CD4-positive, alpha-beta memory T cell (primary cell): ENCODE measurements at regions of chr1 and their contacts with region 1.

Region 1: DNA sequence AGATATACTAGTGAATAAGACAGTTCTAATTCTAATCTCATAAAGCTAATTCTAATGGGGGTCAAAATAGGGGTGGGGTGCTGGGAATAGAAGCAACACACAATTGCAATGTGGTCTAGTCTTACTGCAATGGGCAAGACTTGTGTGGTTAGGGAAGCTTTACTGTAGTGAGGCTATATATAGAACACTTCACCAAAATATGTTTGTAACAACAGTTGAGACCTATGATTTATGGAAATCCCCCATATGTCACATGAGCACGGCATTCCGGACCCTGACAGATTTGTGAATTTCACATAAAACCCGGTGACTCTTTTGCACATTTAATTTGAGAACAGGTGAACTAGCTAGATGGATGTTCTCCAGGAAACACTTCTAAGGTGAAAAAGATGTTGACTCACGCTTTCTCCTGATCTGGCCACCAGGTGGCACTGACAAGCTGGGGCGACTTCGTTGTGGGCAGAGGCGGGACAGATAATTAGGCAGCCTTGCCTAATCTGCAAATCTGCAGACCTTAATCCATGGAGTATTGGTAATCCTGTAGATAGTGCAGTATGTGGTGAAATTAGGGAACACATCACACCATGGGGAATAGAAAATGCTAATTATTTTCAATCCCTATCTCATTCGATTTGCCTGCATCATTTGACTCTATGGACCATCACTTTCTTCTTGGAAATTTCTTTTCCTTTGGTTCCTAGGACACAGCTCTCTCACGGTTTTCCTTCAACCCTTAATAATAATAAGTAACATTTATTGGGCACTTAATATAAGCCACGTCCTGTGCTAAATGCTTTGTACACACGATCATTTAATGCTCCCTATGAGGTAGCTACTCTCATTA is 37.7 kb downstream of the KIAA0040 start:
- DNase-seq: peak; percentile 60 to 70 (median 66)
- H3K4me3 ChIP-seq: no peak overlapping the region
- H3K4me3 Mint-ChIP-seq: no peak overlapping the region
- H3K27ac ChIP-seq: no peak overlapping the region
- H3K27ac Mint-ChIP-seq: no peak overlapping the region
- H3K4me1 ChIP-seq: peaks cover 13% of the 10 kb centered on the region
- H3K4me1 Mint-ChIP-seq: peaks cover 12 to 23% (median 17%) of the 10 kb centered on the region in 4 donors
- H3K27me3 ChIP-seq: no peaks in the 10 kb centered on the region
- H3K27me3 Mint-ChIP-seq: peaks cover 25 to 26% of the 10 kb centered on the region in 2 donors

Region 2: GRCh38 chr1:175192630-175193526 is 38.0 kb after region 1 on chr1 and contains the start of gene KIAA0040:
- CTCF ChIA-PET with region 1: interaction called, 69 read pairs
- POLR2A ChIA-PET with region 1: interaction called, 8 read pairs
- intact Hi-C with region 1: loop called (anchors 2 kb)
- DNase-seq: peak; percentile 49 to 66 (median 51)
- H3K4me3 ChIP-seq: peak within 1 kb of the TSS; percentile 85 to 91
- H3K4me3 Mint-ChIP-seq: peak within 1 kb of the TSS; percentile 92 to 99 (median 98)
- H3K27ac ChIP-seq: peak within 1 kb of the TSS; percentile 75
- H3K27ac Mint-ChIP-seq: peak within 1 kb of the TSS; percentile 92 to 98 (median 96)
- H3K4me1 ChIP-seq: peaks cover 51% of the 10 kb centered on the region
- H3K4me1 Mint-ChIP-seq: peaks cover 39 to 76% (median 51%) of the 10 kb centered on the region in 4 donors
- H3K27me3 ChIP-seq: no peaks in the 10 kb centered on the region
- H3K27me3 Mint-ChIP-seq: no peaks in the 10 kb centered on the region
- total RNA-seq, gene KIAA0040: 28.7 to 33.6 TPM

Region 3: DNA sequence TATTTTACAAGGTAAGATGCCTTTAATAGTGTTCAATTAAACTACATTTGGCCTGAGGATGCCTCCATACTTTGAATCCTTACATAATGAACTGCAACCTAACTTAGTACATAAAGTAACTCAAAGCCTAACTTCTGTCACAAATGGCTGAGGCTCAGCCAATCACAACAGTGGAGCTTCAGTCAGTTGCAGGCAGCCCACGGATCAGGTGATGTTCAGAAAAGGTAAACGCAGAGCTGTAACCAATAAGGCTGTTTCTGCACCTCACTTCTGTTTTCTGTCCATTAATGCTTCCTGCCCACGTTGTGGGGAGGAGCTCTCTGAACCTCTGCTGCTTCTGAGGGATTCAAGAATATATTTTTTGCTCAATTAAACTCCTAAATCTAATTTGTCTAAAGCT is 132.5 kb after region 1 on chr1:
- CTCF ChIA-PET with region 1: interaction called, 10 read pairs
- POLR2A ChIA-PET with region 1: no interaction called
- intact Hi-C with region 1: no loop called
- DNase-seq: no peak
- H3K4me3 ChIP-seq: no peak overlapping the region
- H3K4me3 Mint-ChIP-seq: peak overlapping the region in 1 of 8 donors; percentile 25
- H3K27ac ChIP-seq: no peak overlapping the region
- H3K27ac Mint-ChIP-seq: no peak overlapping the region
- H3K4me1 ChIP-seq: no peaks in the 10 kb centered on the region
- H3K4me1 Mint-ChIP-seq: peaks cover 2 to 13% (median 10%) of the 10 kb centered on the region in 4 donors
- H3K27me3 ChIP-seq: no peaks in the 10 kb centered on the region
- H3K27me3 Mint-ChIP-seq: peaks cover 5% of the 10 kb centered on the region in 2 donors

Region 4: GRCh38 chr1:175319418-175320230 is 164.8 kb after region 1 on chr1:
- CTCF ChIA-PET with region 1: interaction called, 490 read pairs
- POLR2A ChIA-PET with region 1: interaction called, 9 read pairs
- intact Hi-C with region 1: loop called (anchors 1 kb)
- DNase-seq: peak; percentile 54 to 66 (median 63)
- H3K4me3 ChIP-seq: no peak overlapping the region
- H3K4me3 Mint-ChIP-seq: peak overlapping the region in 1 of 8 donors; percentile 45
- H3K27ac ChIP-seq: no peak overlapping the region
- H3K27ac Mint-ChIP-seq: peak overlapping the region in 1 of 7 donors; percentile 61
- H3K4me1 ChIP-seq: peaks cover 5% of the 10 kb centered on the region
- H3K4me1 Mint-ChIP-seq: peaks cover 5 to 18% (median 9%) of the 10 kb centered on the region in 4 donors
- H3K27me3 ChIP-seq: peaks cover 6% of the 10 kb centered on the region
- H3K27me3 Mint-ChIP-seq: peaks cover 5 to 7% of the 10 kb centered on the region in 2 donors

Region 5: GRCh38 chr1:175481126-175482066 is 326.5 kb after region 1 on chr1:
- CTCF ChIA-PET with region 1: no interaction called
- POLR2A ChIA-PET with region 1: no interaction called
- intact Hi-C with region 1: loop called (anchors 5 kb)
- DNase-seq: peak in 2 of 5 donors; percentile 1 to 16
- H3K4me3 ChIP-seq: no peak overlapping the region
- H3K4me3 Mint-ChIP-seq: no peak overlapping the region
- H3K27ac ChIP-seq: no peak overlapping the region
- H3K27ac Mint-ChIP-seq: no peak overlapping the region
- H3K4me1 ChIP-seq: no peaks in the 10 kb centered on the region
- H3K4me1 Mint-ChIP-seq: peaks cover 0 to 4% (median 0%) of the 10 kb centered on the region in 4 donors
- H3K27me3 ChIP-seq: peaks cover 3% of the 10 kb centered on the region
- H3K27me3 Mint-ChIP-seq: peaks cover 7 to 12% of the 10 kb centered on the region in 2 donors